Calu3 (cell line): ENCODE measurements at regions of chr3 and their contacts with region 1.

Region 1: DNA sequence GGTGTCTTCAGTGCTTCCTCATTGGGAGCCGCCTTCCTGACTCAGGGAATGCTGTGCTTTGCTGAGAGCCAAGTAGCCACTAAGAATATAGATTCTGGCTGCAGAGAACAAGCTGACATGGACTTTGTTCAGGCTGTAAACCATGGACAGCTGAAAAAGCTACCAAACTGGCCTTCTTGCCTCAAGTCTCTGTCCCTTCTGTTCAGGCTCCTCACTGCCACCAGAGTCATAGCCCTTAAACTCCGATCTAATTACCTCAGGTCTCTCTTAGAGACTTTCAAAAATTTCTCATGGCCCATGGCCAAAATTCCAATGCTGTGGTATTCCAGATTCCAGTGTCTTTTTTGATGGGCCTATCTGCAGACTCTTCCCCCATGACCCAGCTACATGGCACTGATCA is 19.4 kb upstream of the PTX3 start:
- DNase-seq: no peak
- H3K4me3 Mint-ChIP-seq: no peak overlapping the region
- H3K27ac Mint-ChIP-seq: no peak overlapping the region
- H3K4me1 Mint-ChIP-seq: no peaks in the 10 kb centered on the region
- H3K27me3 Mint-ChIP-seq: no peaks in the 10 kb centered on the region
- CTCF ChIP-seq: no peak

Region 2: DNA sequence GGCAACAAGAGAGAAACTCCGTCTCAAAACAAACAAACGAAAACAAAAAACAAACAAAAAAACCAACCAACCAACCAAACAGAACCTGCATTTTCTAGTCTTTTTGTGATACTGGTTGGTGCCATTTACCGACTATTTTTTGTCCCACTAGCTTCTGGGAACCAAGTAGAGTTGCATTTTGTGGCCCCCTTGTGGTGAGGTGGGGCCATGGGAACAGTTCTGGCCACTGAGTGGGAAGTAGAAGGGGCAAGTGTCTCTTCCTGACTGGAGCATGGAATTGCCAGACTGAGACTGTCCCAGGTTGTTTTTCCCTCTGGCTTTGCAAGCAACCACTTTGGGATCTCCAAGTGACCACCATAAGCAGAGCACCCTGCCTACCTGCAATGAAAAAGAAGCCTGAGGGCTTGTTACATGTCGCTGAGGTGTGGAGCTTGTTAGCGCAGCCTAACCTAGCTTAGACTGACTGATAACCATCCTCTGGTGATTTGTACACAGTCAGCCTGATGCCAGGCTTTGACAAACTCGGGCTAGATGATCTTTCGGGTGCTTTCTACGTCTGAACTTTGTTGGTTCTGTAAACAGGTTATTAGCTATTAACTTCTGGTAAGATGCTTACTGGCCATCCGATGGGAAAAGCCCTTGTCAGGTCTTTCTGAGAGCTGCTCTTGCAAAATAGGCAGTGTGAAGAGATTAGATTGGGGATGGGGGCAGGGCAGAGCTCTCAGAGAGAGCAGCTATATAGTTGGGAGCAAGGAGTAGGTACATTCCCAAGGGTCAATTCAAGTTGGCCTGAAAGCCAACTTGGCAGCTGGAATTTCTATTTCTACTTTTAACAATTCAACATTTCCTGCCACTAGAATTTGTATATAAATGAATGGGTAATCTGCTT is 1034.5 kb before region 1 on chr3:
- CTCF ChIA-PET with region 1: interaction called, 12 read pairs
- intact Hi-C with region 1: no loop called
- DNase-seq: peak; percentile 82
- H3K4me3 Mint-ChIP-seq: no peak overlapping the region
- H3K27ac Mint-ChIP-seq: no peak overlapping the region
- H3K4me1 Mint-ChIP-seq: no peaks in the 10 kb centered on the region
- H3K27me3 Mint-ChIP-seq: peaks cover 80% of the 10 kb centered on the region
- CTCF ChIP-seq: peak; percentile 94